ENCODE measurements at regions of chr21 and their contacts with region 1.

Region 1: DNA sequence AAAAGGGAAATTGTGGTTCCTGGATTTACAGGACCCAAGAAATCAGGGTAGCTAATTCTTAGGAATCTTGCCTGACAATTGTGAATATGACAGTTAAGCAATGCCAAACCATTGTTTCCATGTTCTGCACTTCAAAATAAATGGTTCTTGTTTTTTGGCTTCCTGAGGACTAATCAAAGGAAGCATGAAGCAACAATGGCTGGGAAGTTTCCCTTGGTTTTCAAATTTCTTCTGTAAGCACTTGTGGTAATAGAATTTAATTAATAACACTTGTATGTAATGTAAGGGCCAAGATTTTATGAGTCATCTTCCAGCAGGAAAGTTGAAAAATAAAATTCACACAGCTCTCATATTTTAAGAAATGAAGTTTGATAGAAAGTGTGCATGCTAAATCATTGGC is 31.7 kb downstream of the JAM2 start:
- DNase-seq: no peak
- H3K4me3 ChIP-seq: no peak overlapping the region
- H3K27ac ChIP-seq: peak overlapping the region in 1 of 4 donors; percentile 47
- H3K4me1 ChIP-seq: no peaks in the 10 kb centered on the region
- H3K27me3 ChIP-seq: no peaks in the 10 kb centered on the region
- CTCF ChIP-seq: no peak
- EP300 ChIP-seq: no peak
- POLR2A ChIP-seq: no peak

Region 2: DNA sequence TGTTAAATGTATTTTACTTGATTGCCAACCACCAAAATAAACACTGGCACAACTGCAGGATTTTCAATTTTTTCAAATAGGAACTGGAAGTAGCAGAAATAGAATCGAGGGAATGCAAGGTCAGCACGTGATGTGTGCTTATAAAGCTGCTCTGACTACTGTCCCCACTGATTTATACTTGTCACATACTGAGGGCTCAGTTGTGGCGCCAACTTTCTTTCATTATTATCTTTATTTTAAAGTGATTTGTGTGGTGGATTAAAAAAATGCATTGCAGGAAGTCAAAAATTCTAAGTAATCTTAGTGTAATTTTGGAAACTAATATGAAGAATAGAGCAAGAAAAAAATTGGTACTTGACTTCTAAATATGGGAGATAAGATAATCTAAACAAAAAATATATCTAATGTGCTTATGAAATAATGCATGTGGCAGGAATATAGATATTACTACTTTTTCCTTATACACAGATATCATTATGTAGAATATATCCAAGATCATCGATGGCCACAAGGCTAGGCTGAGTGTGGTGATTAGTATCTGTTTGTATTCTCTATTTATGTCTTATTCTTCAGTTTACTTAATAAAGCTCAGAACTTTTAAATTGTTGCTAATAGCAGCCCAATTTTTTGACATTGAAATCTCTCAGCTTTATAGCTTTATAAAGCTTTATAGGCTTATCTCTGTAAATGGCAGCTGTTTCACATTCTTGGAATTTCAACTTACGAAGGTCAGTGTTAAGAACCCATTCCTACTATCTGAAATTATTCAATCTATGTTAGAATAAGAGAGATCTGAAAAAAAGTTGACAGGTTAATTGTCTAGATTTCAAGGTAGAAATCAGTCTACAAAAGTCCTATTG is 1700.6 kb after region 1 on chr21:
- in situ Hi-C with region 1: no loop called
- intact Hi-C with region 1: loop called (anchors 5 kb)
- DNase-seq: no peak
- H3K4me3 ChIP-seq: no peak overlapping the region
- H3K27ac ChIP-seq: no peak overlapping the region
- H3K4me1 ChIP-seq: no peaks in the 10 kb centered on the region
- H3K27me3 ChIP-seq: no peaks in the 10 kb centered on the region
- CTCF ChIP-seq: no peak
- EP300 ChIP-seq: no peak
- POLR2A ChIP-seq: no peak

Measured in transverse colon (tissue), 4 donors.